ENCODE measurements at regions of chr4 and their contacts with region 1.

Region 1: GRCh38 chr4:87853108-87853507 is 20.3 kb downstream of the MEPE start:
- DNase-seq: peak; percentile 66

Region 2: DNA sequence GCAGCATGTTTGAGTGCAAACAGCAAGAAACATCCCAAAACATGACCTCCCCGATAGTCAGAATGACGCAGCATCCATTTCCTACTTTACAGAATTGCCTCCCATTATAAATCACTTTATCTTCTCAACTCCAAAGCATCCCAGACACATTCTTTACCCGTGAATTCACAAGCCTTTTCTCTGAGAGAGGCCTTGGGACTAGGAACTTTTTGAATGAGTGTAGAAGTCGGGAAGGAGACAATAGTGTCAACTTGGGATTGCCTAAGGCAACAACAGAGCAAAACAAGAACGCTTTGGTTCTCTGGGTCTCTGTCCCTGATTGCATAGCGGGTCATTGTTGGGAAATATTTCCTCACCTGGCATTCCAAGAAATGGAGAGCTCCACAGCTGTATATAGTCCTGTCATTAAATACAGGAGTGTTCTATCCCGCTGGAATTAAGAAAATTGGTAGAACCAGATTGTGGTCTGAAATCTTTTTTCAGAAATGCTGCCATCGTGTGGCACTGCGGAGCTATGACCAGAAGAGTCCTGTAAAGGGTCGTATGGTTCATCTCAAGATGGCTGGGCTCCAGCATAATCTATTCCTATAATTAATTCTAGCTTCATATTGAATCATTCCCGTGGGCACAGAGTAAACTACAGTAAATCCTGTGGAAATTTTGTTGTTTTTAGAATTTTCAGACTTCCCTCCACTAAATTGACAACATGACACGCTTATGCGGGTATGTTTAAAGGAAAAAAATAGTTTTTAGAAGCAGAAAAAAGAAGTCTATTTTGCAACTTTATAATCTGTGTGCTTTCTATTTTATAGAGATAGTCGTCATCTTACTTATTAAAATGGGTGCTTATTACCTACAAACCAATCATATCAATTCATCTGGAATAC is 120.4 kb after region 1 on chr4:
- in situ Hi-C with region 1: loop called (anchors 25 kb)
- DNase-seq: peak; percentile 67

Region 3: GRCh38 chr4:88101165-88101564 is 248.1 kb after region 1 on chr4:
- in situ Hi-C with region 1: no loop called
- DNase-seq: no peak